Activated T-helper 1 cell treated with anti-CD3 and anti-CD28 coated beads, Interleukin-12 subunit alpha, Interleukin-12 subunit beta, Interleukin-2, Interleukin-4 antibody, amounts not matched to agents 30 ng/mL and 10 ng/mL and 1 ng/mL, durations not matched to agents 14 hours and 24 hours and 36 hours (primary cell): ENCODE measurements at regions of chr11 and their contacts with region 1.

Region 1: GRCh38 chr11:62169091-62169847 is 20.7 kb upstream of the SCGB1D1 start:
- DNase-seq: no peak
- H3K4me3 Mint-ChIP-seq: no peak overlapping the region
- H3K27ac Mint-ChIP-seq: no peak overlapping the region
- H3K4me1 Mint-ChIP-seq: peaks cover 5% of the 10 kb centered on the region
- H3K27me3 Mint-ChIP-seq: peaks cover 19% of the 10 kb centered on the region

Region 2: GRCh38 chr11:62061351-62062222 is 107.7 kb before region 1 on chr11:
- intact Hi-C with region 1: no loop called
- DNase-seq: no peak
- H3K4me3 Mint-ChIP-seq: no peak overlapping the region
- H3K27ac Mint-ChIP-seq: no peak overlapping the region
- H3K4me1 Mint-ChIP-seq: no peaks in the 10 kb centered on the region
- H3K27me3 Mint-ChIP-seq: no peaks in the 10 kb centered on the region

Region 3: DNA sequence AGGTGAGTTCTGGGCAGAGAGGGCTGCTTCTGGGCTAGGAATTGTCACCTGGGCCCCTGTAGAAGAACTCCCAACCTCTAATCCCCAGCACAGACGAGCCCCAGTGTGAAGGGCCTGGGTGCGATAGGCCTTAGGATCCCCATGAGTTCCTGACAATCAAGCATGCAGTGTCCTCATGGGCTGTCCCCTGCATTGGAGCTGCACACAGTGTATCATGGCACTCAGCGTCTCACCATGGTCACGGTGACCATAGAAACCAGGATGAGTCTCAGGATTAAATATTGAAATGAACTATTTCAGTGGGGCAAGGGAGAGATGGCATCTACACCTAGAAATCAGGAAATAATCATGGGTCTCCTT is 39.5 kb after region 1 on chr11:
- intact Hi-C with region 1: loop called (anchors 1 kb)
- DNase-seq: no peak
- H3K4me3 Mint-ChIP-seq: no peak overlapping the region
- H3K27ac Mint-ChIP-seq: no peak overlapping the region
- H3K4me1 Mint-ChIP-seq: no peaks in the 10 kb centered on the region
- H3K27me3 Mint-ChIP-seq: peaks cover 6% of the 10 kb centered on the region

Region 4: GRCh38 chr11:62315431-62315830 is 146.2 kb after region 1 on chr11:
- intact Hi-C with region 1: loop called (anchors 1 kb)
- DNase-seq: no peak
- H3K4me3 Mint-ChIP-seq: no peak overlapping the region
- H3K27ac Mint-ChIP-seq: no peak overlapping the region
- H3K4me1 Mint-ChIP-seq: peaks cover 5% of the 10 kb centered on the region
- H3K27me3 Mint-ChIP-seq: peaks cover 16% of the 10 kb centered on the region

Region 5: GRCh38 chr11:62324738-62325556 is 155.7 kb after region 1 on chr11:
- intact Hi-C with region 1: loop called (anchors 1 kb)
- DNase-seq: peak; percentile 35
- H3K4me3 Mint-ChIP-seq: no peak overlapping the region
- H3K27ac Mint-ChIP-seq: no peak overlapping the region
- H3K4me1 Mint-ChIP-seq: peaks cover 13% of the 10 kb centered on the region
- H3K27me3 Mint-ChIP-seq: peaks cover 5% of the 10 kb centered on the region

Region 6: GRCh38 chr11:62372871-62373270 is 203.6 kb after region 1 on chr11:
- intact Hi-C with region 1: loop called (anchors 1 kb)
- DNase-seq: no peak
- H3K4me3 Mint-ChIP-seq: no peak overlapping the region
- H3K27ac Mint-ChIP-seq: no peak overlapping the region
- H3K4me1 Mint-ChIP-seq: peaks cover 19% of the 10 kb centered on the region
- H3K27me3 Mint-ChIP-seq: no peaks in the 10 kb centered on the region